HCT116 (cell line): ENCODE measurements at regions of chr12 and their contacts with region 1.

Region 1: GRCh38 chr12:103771466-103771865 is 69.6 kb downstream of the NT5DC3 start:
- DNase-seq: no peak
- ATAC-seq: peak; percentile 85
- H3K4me3 ChIP-seq: no peak overlapping the region
- H3K27ac ChIP-seq: no peak overlapping the region
- H3K4me1 ChIP-seq: peaks cover 6 to 8% of the 10 kb centered on the region in 2 experiments; a peak in 2 of 4 replicates
- H3K27me3 ChIP-seq: no peaks in the 10 kb centered on the region
- CTCF ChIP-seq: peak; percentile 64 to 73 (median 68); a peak in 5 of 6 replicates
- POLR2A ChIP-seq: no peak
- RAD21 ChIP-seq: peak; percentile 91

Region 2: DNA sequence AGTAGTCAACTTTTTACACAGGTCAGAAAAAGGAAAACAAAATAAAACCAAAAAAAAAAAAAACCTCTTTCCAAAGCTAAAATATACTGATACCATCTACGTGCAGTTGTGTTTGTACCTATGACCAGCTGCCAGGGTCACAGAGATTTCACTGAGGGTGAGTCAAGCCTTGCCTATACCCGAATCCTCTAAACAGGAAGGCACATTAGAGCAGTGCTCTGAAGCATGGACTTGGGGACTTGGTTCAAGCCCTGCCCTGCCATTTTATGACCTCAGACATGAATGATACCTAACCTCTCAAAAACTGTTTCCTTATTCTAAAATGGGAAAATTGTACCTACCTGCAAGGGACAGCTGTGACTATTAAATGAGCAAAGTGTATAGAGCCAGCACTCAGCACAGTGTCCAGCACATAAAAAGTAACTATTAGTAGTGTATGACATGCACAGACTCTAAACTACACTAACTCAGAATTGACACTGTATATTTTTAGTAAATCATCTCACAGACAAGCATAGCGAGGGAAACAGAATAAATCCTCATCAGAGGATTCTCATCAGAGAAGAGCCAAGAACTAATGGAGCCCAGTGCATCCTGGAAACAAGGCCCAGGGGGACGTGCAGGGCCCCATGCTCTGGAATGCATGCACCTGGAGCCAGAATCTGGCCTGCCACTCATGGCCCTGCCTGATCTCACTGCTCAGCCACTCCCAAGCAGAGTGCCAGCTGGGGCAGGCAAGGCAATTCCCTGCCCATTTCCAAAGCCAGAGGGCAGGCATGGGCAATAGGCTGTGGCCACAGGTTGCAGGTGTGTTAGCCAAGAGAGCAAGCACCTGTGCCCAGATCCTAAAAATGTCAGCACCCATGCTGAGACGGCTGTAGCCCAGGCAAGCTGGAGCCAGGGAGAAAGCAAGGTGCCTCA is 12.5 kb after region 1 on chr12:
- CTCF ChIA-PET with region 1: no interaction called
- POLR2A ChIA-PET with region 1: no interaction called
- RAD21 ChIA-PET with region 1: no interaction called
- intact Hi-C with region 1: no loop called
- DNase-seq: no peak
- ATAC-seq: peak; percentile 34; the same call in 1 of the 2 replicates
- H3K4me3 ChIP-seq: no peak overlapping the region
- H3K27ac ChIP-seq: no peak overlapping the region
- H3K4me1 ChIP-seq: peaks cover 4 to 9% of the 10 kb centered on the region in 2 experiments; a peak in 2 of 4 replicates
- H3K27me3 ChIP-seq: no peaks in the 10 kb centered on the region
- CTCF ChIP-seq: peak in 1 of 3 experiments; percentile 10; a peak in 2 of 6 replicates
- POLR2A ChIP-seq: no peak
- RAD21 ChIP-seq: peak; percentile 46; the same call in 1 of the 2 replicates

Region 3: DNA sequence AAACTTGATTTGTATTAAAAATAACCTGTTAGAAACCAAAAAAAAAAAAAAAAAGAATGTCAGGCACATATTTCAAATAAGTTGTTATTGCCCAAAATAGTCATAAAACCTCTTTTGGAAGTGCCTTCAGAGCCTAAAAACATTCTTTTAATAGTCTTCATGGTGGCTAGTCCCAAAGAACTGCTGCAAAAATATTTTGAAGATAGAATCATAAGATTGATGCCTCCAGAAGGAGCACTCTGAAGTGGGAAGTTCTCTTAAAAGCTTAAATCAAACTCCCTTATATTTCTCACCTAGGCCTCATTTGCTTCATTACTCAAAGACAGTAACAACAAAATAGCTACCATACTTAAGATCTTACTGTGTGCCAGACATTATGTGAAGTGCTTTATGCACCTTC is 96.7 kb after region 1 on chr12:
- CTCF ChIA-PET with region 1: interaction called, 6 read pairs
- POLR2A ChIA-PET with region 1: no interaction called
- RAD21 ChIA-PET with region 1: interaction called in 1 of 2 experiments, 3 read pairs
- intact Hi-C with region 1: loop called (anchors 1 kb)
- DNase-seq: no peak
- ATAC-seq: no peak
- H3K4me3 ChIP-seq: no peak overlapping the region
- H3K27ac ChIP-seq: no peak overlapping the region
- H3K4me1 ChIP-seq: no peaks in the 10 kb centered on the region
- H3K27me3 ChIP-seq: no peaks in the 10 kb centered on the region
- CTCF ChIP-seq: no peak
- POLR2A ChIP-seq: no peak
- RAD21 ChIP-seq: no peak

Region 4: GRCh38 chr12:103947871-103948555 is 176.5 kb after region 1 on chr12:
- CTCF ChIA-PET with region 1: no interaction called
- POLR2A ChIA-PET with region 1: no interaction called
- RAD21 ChIA-PET with region 1: no interaction called
- intact Hi-C with region 1: loop called (anchors 10 kb)
- DNase-seq: no peak
- ATAC-seq: no peak; the same call in 1 of the 2 replicates
- H3K4me3 ChIP-seq: no peak overlapping the region
- H3K27ac ChIP-seq: no peak overlapping the region
- H3K4me1 ChIP-seq: no peaks in the 10 kb centered on the region
- H3K27me3 ChIP-seq: no peaks in the 10 kb centered on the region
- CTCF ChIP-seq: no peak
- POLR2A ChIP-seq: no peak
- RAD21 ChIP-seq: no peak